Gastrocnemius medialis (tissue), 4 donors: ENCODE measurements at regions of chr19 and their contacts with region 1.

Region 1: DNA sequence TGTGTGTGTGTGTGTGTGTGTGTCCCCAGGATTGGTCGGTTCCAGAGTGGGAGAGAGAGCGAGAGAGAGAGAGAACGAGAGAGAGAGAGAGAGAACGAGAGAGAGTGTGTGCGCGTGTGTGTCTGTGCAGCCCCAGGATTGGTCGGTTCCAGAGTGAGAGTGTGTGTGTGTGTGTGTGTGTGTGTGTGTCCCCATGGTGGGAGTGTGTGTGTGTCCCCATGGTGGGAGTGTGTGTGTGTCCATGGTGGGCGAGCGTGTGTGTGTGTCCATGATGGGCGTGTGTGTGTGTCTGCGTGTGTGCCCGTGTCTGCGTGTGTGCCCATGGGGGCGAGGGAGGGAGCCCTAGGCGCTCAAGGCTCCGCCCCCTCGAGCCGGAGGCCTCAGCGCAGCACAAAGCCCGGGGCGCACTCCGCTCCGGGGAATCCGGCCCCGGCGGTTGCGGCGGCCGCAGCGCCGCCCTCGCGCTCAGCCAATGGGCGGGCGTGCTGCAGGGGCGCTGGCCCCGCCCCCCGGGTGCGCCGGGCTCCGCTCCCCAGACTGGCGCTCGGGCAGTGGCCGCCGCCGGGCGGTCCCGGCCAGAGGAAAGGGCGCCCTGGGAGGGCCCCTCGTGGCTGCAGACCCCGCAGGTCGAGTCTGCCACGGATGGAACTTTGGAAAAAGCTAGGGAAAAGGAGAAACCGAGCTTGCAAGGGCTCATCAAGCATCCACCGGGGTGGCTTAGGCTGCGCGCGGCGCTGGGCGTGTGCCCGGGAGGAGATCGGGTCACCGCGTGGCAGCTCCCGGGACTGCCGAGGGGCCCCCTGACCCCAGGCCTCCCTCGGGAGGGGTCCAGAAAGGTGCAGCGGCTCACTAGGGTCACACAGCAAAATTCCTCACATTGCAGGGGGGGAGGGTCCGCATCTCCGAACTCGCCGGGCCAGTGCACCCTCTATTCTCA is 96.2 kb downstream of the INSR start:
- DNase-seq: peak; percentile 91 to 95
- ATAC-seq: peak; percentile 77 to 82
- H3K4me3 ChIP-seq: peak overlapping the region; percentile 52 to 86 (median 68)
- H3K27ac ChIP-seq: peak overlapping the region; percentile 76 to 93 (median 86)
- H3K4me1 ChIP-seq: peaks cover 18 to 26% of the 10 kb centered on the region in 2 donors
- H3K27me3 ChIP-seq: no peaks in the 10 kb centered on the region
- CTCF ChIP-seq: peak; percentile 26 to 52 (median 48)
- POLR2A ChIP-seq: peak; percentile 49 to 73

Region 2: GRCh38 chr19:7098701-7099596 is 99.1 kb before region 1 on chr19:
- in situ Hi-C with region 1: no loop called
- intact Hi-C with region 1: loop called (anchors 1 kb)
- DNase-seq: peak; percentile 84 to 89
- ATAC-seq: peak; percentile 94 to 95
- H3K4me3 ChIP-seq: peak overlapping the region; percentile 73 to 92 (median 78)
- H3K27ac ChIP-seq: peak overlapping the region; percentile 92 to 99 (median 94)
- H3K4me1 ChIP-seq: peaks cover 0 to 9% of the 10 kb centered on the region in 2 donors
- H3K27me3 ChIP-seq: no peaks in the 10 kb centered on the region
- CTCF ChIP-seq: no peak
- POLR2A ChIP-seq: no peak

Region 3: GRCh38 chr19:7177926-7178325 is 20.1 kb before region 1 on chr19:
- in situ Hi-C with region 1: no loop called
- intact Hi-C with region 1: loop called (anchors 2 kb)
- DNase-seq: no peak
- ATAC-seq: no peak
- H3K4me3 ChIP-seq: no peak overlapping the region
- H3K27ac ChIP-seq: peak overlapping the region; percentile 83 to 89 (median 84)
- H3K4me1 ChIP-seq: peaks cover 49 to 64% of the 10 kb centered on the region in 2 donors
- H3K27me3 ChIP-seq: no peaks in the 10 kb centered on the region
- CTCF ChIP-seq: no peak
- POLR2A ChIP-seq: no peak

Region 4: DNA sequence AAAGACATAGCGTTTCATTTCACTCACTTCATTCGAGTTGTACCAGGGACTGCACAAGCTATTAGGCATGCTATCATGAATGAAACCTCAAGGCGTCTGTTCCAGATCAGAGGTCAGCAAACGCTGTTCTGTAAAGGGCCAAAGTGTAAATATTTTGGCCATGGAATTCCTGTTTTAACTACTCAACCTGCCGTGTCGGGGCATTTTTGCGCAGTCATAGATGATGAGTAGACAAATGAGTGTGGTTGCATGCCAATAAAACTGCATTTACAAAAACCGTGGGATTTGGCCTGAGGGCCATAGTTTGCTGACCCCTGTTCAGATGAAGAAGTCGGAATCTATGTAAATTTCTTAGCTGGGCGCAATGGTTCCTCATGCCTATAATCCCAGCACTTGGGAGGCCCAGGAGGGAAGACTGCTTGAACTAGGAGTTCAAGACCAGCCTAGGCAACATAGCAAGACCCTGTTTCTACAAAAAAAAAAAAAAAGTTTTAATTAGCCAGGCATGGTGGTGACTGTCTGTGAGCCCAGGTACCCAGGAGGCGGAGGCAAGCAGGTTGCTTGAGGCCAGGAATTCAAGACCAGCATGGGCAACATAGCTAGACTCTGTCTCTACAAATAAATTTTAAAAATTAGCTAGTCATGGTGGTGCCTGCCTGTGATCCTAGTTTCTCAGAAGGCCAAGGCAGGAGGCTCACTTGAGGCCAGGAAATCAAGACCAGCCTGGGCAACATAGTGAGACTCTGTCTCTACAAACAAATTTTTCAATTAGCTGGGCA is 89.9 kb after region 1 on chr19:
- in situ Hi-C with region 1: loop called (anchors 5 to 10 kb)
- intact Hi-C with region 1: no loop called
- DNase-seq: no peak
- ATAC-seq: no peak
- H3K4me3 ChIP-seq: no peak overlapping the region
- H3K27ac ChIP-seq: peak overlapping the region in 3 of 4 donors; percentile 13 to 58 (median 32)
- H3K4me1 ChIP-seq: peaks cover 5 to 7% of the 10 kb centered on the region in 2 donors
- H3K27me3 ChIP-seq: no peaks in the 10 kb centered on the region
- CTCF ChIP-seq: no peak
- POLR2A ChIP-seq: no peak

Region 5: GRCh38 chr19:7497292-7497691 is 299.3 kb after region 1 on chr19:
- in situ Hi-C with region 1: no loop called
- intact Hi-C with region 1: loop called (anchors 10 kb)
- DNase-seq: no peak
- ATAC-seq: no peak
- H3K4me3 ChIP-seq: no peak overlapping the region
- H3K27ac ChIP-seq: no peak overlapping the region
- H3K4me1 ChIP-seq: peaks cover 6 to 8% of the 10 kb centered on the region in 2 donors
- H3K27me3 ChIP-seq: peaks cover 1 to 21% (median 11%) of the 10 kb centered on the region in 3 donors
- CTCF ChIP-seq: no peak
- POLR2A ChIP-seq: no peak